Activated CD8-positive, alpha-beta T cell treated with anti-CD3 and anti-CD28 coated beads for 36 hours (primary cell): ENCODE measurements at regions of chr12 and their contacts with region 1.

Region 1: DNA sequence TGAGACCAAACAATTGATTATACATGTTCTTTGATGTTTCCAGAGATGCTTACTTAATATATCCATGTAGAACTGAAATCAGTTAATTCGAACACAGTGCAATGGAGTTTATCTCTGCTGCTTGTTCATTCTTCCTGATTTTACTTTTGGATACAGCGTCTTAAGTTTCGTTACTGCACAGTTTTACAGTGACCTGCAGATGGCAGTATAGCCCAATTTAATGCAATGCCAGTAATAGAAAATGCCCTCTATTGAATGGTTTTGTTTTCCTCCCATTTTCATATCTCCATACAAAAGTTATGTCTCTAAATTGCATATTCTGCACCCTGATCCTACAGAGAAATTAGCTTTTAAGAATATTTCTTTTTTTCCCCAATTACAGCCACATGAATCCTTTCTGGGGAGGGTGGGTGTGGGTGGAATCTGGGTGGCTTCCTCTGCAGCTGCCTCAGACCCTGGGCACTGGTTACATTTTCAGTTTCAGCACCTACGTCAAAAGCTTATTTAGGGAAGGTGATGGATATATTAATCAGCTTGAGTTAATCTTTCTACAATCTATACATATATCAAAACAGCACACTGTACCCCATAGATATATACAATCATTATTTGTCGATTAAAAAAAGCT is 101.1 kb upstream of the DCD start:
- DNase-seq: peak; percentile 44
- ATAC-seq: peak; percentile 86
- H3K4me3 Mint-ChIP-seq: peak overlapping the region; percentile 30
- H3K27ac Mint-ChIP-seq: no peak overlapping the region
- H3K4me1 Mint-ChIP-seq: peaks cover 19% of the 10 kb centered on the region
- H3K27me3 Mint-ChIP-seq: no peaks in the 10 kb centered on the region
- CTCF ChIP-seq: peak; percentile 72

Region 2: GRCh38 chr12:54701940-54702592 is 47.2 kb before region 1 on chr12:
- CTCF ChIA-PET with region 1: interaction called, 35 read pairs
- POLR2A ChIA-PET with region 1: no interaction called
- intact Hi-C with region 1: no loop called
- DNase-seq: peak; percentile 24
- ATAC-seq: peak; percentile 47
- H3K4me3 Mint-ChIP-seq: no peak overlapping the region
- H3K27ac Mint-ChIP-seq: no peak overlapping the region
- H3K4me1 Mint-ChIP-seq: no peaks in the 10 kb centered on the region
- H3K27me3 Mint-ChIP-seq: peaks cover 4% of the 10 kb centered on the region
- CTCF ChIP-seq: peak; percentile 73

Region 3: DNA sequence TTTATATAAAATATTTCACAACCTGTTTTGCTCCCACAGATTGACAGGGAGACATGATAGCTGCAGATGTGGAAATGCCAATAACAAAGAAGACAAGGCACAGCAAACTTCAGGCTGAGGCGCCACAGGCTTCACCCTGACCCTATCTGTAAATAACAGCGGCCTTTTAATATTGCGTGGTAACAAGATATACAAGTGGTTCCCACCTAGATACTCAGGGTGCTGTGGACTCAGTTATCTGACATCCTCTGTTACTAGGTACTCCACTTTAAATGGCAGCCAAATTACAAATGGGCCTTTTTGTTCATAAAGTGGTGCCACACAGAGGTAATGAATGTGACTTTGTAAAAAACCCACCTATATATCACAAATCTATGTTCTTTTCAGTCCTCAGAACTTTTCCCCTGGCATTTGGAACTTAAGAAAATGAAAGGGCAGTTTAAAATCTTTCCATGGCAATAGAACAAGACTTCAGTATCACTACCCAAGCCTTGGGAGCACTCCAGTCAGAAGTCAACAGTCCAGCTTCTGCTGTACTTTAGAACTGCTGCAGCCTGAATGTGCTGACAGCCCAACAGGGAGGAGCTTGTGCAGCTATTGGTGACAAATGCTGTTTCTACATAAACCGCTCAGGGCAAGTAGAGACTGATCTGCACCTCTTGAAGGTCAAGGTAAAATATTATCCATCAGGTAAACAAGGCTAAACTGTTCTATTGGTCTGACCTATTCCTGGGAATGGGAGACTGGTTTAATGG is 14.9 kb before region 1 on chr12:
- CTCF ChIA-PET with region 1: interaction called, 27 read pairs
- POLR2A ChIA-PET with region 1: no interaction called
- intact Hi-C with region 1: no loop called
- DNase-seq: no peak
- ATAC-seq: no peak
- H3K4me3 Mint-ChIP-seq: no peak overlapping the region
- H3K27ac Mint-ChIP-seq: no peak overlapping the region
- H3K4me1 Mint-ChIP-seq: peaks cover 15% of the 10 kb centered on the region
- H3K27me3 Mint-ChIP-seq: no peaks in the 10 kb centered on the region
- CTCF ChIP-seq: no peak

Region 4: GRCh38 chr12:54840317-54840771 is 91.0 kb after region 1 on chr12:
- CTCF ChIA-PET with region 1: interaction called, 12 read pairs
- POLR2A ChIA-PET with region 1: no interaction called
- intact Hi-C with region 1: no loop called
- DNase-seq: no peak
- ATAC-seq: no peak
- H3K4me3 Mint-ChIP-seq: no peak overlapping the region
- H3K27ac Mint-ChIP-seq: no peak overlapping the region
- H3K4me1 Mint-ChIP-seq: no peaks in the 10 kb centered on the region
- H3K27me3 Mint-ChIP-seq: peaks cover 7% of the 10 kb centered on the region
- CTCF ChIP-seq: no peak

Region 5: DNA sequence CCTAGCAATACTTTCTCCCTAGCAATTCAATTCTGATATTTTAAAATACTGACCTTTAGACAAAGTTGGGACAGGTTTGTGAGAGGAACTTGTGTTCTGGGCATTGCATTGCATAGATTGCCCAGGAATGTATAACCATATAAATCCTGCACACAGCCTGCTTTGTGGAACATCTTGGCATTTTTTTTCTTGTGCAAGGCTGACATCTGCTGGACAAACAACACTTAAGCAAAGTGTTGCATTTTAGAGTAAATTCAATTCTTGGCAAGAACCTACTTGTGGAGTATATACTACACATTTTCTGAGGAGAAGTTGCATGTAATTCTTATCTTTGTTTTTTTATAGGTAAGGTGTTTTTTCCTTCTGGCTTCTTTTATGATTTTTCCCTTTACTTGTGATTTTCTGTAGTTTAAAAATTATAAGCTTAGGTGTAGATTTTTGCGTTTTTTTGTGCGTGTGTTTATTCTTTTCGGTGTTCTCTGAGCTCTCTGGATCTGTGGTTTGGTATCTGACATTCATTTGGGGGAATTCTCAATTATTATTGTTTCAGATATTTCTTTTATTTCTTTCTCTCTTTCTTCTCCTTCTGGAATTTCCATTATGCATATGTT is 208.8 kb after region 1 on chr12:
- CTCF ChIA-PET with region 1: interaction called, 75 read pairs
- POLR2A ChIA-PET with region 1: interaction called, 6 read pairs
- intact Hi-C with region 1: loop called (anchors 1 kb)
- DNase-seq: peak; percentile 54
- ATAC-seq: no peak
- H3K4me3 Mint-ChIP-seq: no peak overlapping the region
- H3K27ac Mint-ChIP-seq: peak overlapping the region; percentile 95
- H3K4me1 Mint-ChIP-seq: peaks cover 90% of the 10 kb centered on the region
- H3K27me3 Mint-ChIP-seq: no peaks in the 10 kb centered on the region
- CTCF ChIP-seq: peak; percentile 91

Region 6: DNA sequence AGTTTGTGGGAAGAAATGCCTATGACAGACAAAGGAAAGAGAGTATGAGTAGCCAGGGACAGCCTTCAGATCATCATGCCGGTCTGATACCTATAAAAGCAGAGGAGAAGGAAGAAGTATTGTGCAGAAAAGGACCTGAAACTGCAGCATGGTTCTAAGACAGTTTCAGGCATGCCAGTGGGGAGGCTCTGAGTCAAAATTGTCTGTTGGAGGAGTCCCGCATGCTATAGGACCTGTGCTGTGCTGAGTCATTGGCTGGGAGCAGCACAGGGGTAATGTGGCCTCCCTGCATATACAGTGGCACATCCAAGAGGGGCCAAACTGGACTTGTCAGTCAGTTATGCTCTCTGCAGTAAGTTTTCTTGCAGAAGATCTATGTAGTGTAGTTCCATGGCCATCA is 311.2 kb after region 1 on chr12:
- CTCF ChIA-PET with region 1: interaction called, 10 read pairs
- POLR2A ChIA-PET with region 1: no interaction called
- intact Hi-C with region 1: no loop called
- DNase-seq: peak; percentile 67
- ATAC-seq: peak; percentile 100
- H3K4me3 Mint-ChIP-seq: no peak overlapping the region
- H3K27ac Mint-ChIP-seq: no peak overlapping the region
- H3K4me1 Mint-ChIP-seq: peaks cover 10% of the 10 kb centered on the region
- H3K27me3 Mint-ChIP-seq: peaks cover 3% of the 10 kb centered on the region
- CTCF ChIP-seq: no peak